Left colon (tissue), 2 donors: ENCODE measurements at regions of chr18 and their contacts with region 1.

Region 1: GRCh38 chr18:74353169-74353775 is 37.6 kb downstream of the C18orf63 start:
- DNase-seq: peak; percentile 49 to 62
- ATAC-seq: peak; percentile 94

Region 2: DNA sequence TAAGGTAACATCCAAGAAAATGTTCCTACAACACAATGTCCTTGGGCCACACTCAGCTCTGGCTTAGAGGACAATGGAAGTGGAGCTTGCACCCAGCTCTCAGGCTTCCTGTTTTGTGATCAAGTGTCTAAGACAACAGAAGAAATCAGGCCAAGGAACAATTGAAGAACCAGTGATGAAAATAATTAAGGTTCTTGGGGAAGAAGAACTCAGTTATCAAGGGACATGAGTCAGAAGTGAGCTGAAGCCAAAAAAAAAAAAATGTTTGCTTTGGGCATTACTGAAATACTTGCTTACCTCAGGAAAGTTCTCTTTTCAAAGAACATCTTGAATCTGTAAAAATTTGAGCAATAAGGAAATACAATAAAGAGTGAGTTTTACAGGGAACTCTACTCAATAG is 504.6 kb before region 1 on chr18:
- intact Hi-C with region 1: no loop called
- DNase-seq: no peak
- ATAC-seq: no peak

Region 3: DNA sequence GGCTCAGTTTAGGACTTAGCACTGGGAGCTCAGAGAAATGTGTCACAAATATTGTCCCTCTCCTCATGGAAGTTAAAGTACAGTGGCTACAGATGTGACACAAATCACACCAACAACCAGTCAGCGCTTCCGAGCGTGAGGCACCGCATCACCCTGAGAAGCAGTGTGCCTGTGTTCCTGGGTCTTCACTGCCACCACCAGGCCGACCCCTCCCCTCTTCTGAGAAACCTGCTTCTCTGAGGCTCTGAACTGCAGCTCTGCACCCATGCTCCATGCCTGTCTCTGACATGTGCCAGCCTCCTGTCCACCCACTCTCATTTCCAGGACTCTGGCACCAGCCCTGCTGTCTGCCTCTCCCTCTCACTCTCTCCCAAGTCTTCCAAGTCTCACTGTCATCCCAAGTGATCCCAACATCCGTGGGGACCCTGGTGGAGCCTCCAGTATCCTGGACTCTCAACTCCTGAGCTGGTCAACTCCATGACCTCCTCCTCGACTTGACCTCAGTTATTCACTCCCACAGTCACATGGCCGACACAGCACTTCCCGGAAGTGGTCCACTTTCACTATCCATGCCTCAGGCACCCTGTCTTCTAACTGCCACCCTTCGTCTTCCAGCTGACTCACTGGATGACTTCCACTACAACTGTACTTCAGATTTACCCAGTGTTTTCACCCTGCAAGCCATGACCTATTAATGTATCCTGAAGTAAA is 279.2 kb before region 1 on chr18:
- intact Hi-C with region 1: no loop called
- DNase-seq: no peak
- ATAC-seq: no peak

Region 4: GRCh38 chr18:74493689-74494088 is 140.4 kb after region 1 on chr18:
- intact Hi-C with region 1: loop called in 1 of 2 experiments (anchors 5 kb)
- DNase-seq: peak; percentile 49 to 50
- ATAC-seq: peak; percentile 20

Region 5: DNA sequence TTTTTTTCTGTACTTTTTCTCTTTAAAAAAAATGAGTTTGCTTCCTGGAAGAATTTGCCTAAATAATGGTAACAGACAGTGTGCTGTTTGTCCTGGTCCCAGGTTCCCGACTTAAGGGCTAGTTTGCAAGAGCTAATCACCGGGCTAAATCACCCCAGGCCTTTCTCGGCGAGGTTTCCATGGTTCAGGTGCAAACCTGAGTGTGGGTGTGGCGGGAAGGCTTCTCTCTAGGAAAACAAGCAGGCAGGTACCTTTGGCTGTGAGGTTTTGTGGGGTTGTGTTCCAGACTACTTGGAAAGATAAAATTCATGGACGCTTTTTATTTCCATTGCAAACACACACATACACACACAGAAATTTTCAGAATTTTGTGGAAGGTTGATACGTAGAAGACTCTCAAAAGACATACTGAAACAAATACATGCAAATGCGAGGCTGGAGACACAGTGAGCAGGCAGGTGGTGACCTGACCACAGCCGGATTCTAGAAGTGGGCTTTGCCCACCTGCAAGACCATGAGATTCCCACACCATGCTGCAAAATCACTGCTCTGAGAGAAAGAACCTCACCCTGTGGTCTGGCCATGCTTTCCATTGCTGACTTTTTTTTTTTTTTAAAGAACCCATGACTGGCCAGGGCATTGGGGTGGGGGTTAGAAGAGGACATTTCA is 181.8 kb after region 1 on chr18:
- intact Hi-C with region 1: no loop called
- DNase-seq: no peak
- ATAC-seq: peak; percentile 37

Region 6: DNA sequence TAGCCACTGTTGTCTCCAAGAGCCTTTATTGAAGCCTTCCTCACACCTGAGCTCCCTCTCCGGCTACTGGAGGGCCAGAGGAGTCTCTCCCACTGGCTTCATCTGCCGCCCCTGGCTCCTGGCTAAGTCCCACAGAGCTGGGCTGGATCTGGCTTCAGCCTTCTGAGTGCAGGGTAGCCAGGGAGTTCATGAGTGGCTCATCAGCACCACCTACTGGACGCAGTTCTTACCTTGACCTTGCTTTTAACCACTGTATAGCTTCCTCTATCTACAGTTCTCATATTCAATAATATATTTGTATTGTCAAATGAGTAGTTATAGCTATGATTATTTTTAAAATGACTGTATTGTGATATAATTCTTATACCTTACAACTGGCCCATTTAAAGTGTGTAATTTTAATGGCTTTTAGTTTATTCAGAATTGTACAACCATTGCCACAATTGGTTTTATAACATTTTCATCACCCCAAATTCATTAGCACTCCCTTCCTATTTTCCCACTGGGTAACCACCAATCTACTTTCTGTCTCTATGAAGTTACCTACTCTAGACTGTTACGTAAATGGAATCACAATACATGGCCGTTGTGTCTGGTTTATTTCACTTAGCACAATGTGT is 198.8 kb after region 1 on chr18:
- intact Hi-C with region 1: loop called in 1 of 2 experiments (anchors 5 kb)
- DNase-seq: peak; percentile 73 to 94
- ATAC-seq: peak; percentile 98

Region 7: DNA sequence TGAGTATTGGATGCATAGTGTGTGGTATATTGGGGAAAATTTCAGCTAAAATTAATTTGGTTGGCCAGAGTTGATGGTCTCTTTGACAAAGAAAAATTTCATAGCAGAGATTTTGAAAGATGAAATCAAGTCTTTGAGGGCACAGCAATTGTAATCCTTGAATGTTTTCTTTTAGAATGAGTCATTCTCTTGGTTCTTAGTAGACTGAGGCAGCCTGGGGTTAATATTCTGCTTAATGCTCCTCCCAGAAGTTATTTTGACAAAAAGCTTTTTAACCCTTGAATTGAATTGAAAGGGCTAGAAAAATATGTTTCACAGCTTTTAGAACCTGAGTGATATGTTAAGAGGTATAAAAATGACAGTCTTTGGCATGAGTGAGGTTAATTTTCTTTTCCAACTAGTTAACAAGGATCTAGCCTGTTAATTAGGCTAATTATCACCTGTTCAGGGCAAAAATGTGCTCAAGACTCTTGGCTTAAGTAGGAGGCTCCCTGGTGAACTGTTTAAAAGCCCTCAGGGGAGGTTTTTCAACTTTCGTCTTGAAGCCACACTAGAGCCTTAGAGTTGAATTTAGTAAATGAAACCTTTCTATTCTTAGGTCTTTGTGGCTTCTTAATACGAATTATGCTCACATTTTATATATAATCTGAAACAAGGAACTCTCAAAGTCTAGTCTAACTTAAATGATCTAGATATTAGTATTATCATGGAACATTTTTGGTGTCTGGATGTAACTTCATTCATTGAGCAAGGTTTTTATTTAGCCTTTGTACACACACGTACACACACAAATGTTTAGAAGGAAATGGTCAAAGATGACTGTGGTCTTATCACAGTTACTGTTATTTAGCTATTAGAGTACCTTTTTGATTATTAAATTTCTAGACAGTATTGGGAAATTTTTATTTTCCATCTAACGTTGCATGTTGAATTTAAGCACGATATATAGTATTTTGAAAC is 516.9 kb after region 1 on chr18:
- intact Hi-C with region 1: no loop called
- DNase-seq: no peak
- ATAC-seq: no peak